ENCODE measurements at regions of chr15 and their contacts with region 1.

Region 1: GRCh38 chr15:66578286-66578875 is 12.6 kb upstream of the LCTL start:
- DNase-seq: no peak
- H3K4me3 ChIP-seq: no peak overlapping the region
- CTCF ChIP-seq: no peak

Region 2: DNA sequence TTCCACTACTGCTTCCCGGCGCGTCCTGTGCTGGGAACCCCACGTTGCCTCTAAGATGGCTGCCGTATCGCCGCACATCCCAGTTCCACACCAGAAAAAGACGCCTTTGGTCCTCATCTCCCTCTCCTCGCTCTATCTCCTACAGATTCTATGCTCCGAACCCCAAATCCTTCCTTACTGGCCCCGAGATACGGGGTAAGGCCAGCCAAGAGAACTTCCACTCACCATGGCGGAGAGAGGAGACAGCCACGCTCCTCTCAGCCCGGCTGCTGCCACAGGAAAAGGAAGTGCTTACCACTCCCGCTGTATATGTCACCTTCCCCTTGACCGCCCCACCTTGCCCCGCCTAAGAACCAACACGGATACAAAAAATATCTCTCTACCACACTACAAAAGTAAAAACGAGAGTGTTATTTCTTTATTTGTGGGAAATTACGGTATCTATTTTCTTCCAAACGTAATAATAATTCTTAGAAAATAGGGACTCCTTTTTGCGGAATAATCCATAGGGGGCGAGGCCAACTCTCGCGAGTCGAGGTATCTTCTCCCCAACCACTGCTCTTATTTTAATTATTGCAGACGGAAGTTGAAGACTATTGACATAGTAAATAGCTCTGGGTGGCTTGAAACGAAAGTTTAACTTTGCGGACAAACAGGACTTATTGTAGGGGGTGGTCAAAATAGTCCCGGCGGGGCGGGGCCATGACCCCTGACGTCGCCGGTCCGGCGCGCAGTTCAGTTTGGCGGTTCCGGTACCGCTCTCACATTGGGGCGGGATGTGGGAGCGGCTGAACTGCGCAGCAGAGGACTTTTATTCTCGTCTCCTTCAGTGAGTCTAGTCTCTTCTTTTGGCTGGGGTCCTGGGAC is 73.6 kb before region 1 on chr15 and contains the starts of genes RPL4 and ZWILCH:
- in situ Hi-C with region 1: loop called (anchors 5 kb)
- DNase-seq: peak; percentile 75
- H3K4me3 ChIP-seq: peak within 1 kb of the TSS; percentile 66
- CTCF ChIP-seq: no peak

Measured in astrocyte of the cerebellum (primary cell).